ENCODE measurements at regions of chr14 and their contacts with region 1.

Region 1: DNA sequence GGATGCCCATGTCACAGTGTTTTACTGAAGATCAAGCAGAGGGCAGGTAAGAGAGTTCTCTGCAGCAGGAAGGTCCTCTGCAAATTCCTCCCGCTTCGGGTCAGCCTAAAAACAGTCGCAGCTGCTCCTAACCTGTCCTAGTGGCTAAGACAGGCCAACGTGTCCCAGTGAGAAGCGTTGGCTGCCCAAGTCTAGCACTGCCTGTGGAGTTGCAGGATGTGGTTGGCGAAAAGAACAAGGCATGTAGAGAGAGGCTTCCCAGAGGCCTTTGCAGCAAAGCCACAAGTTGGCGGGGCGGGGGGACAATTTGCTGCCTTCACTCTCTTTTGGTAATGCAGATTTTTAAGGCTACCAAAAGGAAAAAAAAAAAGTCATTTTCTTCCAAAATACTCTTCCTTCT is 340.1 kb downstream of the BCL11B start:
- DNase-seq: peak; percentile 56 to 93 (median 79)
- ATAC-seq: peak; percentile 95
- H3K4me3 ChIP-seq: peak overlapping the region; percentile 36
- H3K4me3 Mint-ChIP-seq: peak overlapping the region; percentile 67
- H3K27ac ChIP-seq: peak overlapping the region; percentile 50 to 52
- H3K27ac Mint-ChIP-seq: peak overlapping the region; percentile 87
- H3K4me1 ChIP-seq: peaks cover 80% of the 10 kb centered on the region
- H3K4me1 Mint-ChIP-seq: peaks cover 98% of the 10 kb centered on the region
- H3K27me3 ChIP-seq: no peaks in the 10 kb centered on the region
- H3K27me3 Mint-ChIP-seq: no peaks in the 10 kb centered on the region
- CTCF ChIP-seq: no peak

Region 2: GRCh38 chr14:98154254-98154653 is 777.7 kb before region 1 on chr14:
- CTCF ChIA-PET with region 1: no interaction called
- POLR2A ChIA-PET with region 1: no interaction called
- intact Hi-C with region 1: loop called in 1 of 2 experiments (anchors 10 kb)
- DNase-seq: no peak
- ATAC-seq: no peak
- H3K4me3 ChIP-seq: no peak overlapping the region
- H3K4me3 Mint-ChIP-seq: no peak overlapping the region
- H3K27ac ChIP-seq: no peak overlapping the region
- H3K27ac Mint-ChIP-seq: peak overlapping the region; percentile 28
- H3K4me1 ChIP-seq: peaks cover 8% of the 10 kb centered on the region
- H3K4me1 Mint-ChIP-seq: peaks cover 78% of the 10 kb centered on the region
- H3K27me3 ChIP-seq: no peaks in the 10 kb centered on the region
- H3K27me3 Mint-ChIP-seq: no peaks in the 10 kb centered on the region
- CTCF ChIP-seq: no peak

Region 3: DNA sequence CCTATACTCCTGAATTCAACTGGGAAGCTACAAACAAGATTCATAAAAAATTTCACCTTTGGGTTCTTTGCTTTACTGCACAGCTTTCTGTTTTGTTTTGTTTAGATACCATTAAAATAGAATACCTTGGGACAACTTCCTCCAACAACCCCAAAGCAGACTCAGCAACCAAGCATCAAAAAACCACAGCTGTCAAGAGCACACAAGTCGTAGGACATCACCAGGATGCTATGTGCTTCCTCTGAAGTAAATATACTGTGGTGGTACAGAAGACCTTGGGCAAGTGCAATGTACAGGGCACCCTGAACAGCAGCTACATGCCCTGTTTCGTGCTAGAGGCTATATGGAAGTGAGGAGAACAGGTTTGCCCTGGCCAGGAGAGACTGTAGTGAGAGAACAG is 19.3 kb before region 1 on chr14:
- CTCF ChIA-PET with region 1: no interaction called
- POLR2A ChIA-PET with region 1: interaction called, 17 read pairs
- intact Hi-C with region 1: no loop called
- DNase-seq: peak in 5 of 14 experiments; percentile 9 to 79 (median 39)
- ATAC-seq: peak; percentile 84
- H3K4me3 ChIP-seq: no peak overlapping the region
- H3K4me3 Mint-ChIP-seq: peak overlapping the region; percentile 21
- H3K27ac ChIP-seq: no peak overlapping the region
- H3K27ac Mint-ChIP-seq: peak overlapping the region; percentile 60
- H3K4me1 ChIP-seq: peaks cover 22% of the 10 kb centered on the region
- H3K4me1 Mint-ChIP-seq: peaks cover 47% of the 10 kb centered on the region
- H3K27me3 ChIP-seq: no peaks in the 10 kb centered on the region
- H3K27me3 Mint-ChIP-seq: no peaks in the 10 kb centered on the region
- CTCF ChIP-seq: no peak

Region 4: DNA sequence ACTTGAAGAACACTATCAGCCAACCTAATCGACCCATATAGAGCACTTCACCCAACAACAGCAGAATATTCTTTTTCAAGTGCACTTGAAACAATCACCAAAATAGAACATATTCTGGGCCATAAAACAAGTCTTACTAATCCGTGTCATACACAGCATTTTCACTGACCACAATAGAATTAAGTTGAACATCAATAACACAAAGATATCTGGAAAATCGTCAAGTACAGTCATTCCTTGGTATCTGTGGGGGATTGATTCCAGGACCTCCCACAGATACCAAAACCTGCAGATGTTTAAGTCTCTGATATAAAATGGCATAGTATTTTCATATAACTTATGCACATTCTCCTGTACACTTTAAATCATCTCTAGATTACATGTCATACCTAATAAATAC is 44.4 kb after region 1 on chr14:
- CTCF ChIA-PET with region 1: no interaction called
- POLR2A ChIA-PET with region 1: no interaction called
- intact Hi-C with region 1: loop called (anchors 5 kb)
- DNase-seq: no peak
- ATAC-seq: no peak
- H3K4me3 ChIP-seq: no peak overlapping the region
- H3K4me3 Mint-ChIP-seq: no peak overlapping the region
- H3K27ac ChIP-seq: no peak overlapping the region
- H3K27ac Mint-ChIP-seq: no peak overlapping the region
- H3K4me1 ChIP-seq: no peaks in the 10 kb centered on the region
- H3K4me1 Mint-ChIP-seq: peaks cover 8% of the 10 kb centered on the region
- H3K27me3 ChIP-seq: no peaks in the 10 kb centered on the region
- H3K27me3 Mint-ChIP-seq: no peaks in the 10 kb centered on the region
- CTCF ChIP-seq: no peak

Region 5: DNA sequence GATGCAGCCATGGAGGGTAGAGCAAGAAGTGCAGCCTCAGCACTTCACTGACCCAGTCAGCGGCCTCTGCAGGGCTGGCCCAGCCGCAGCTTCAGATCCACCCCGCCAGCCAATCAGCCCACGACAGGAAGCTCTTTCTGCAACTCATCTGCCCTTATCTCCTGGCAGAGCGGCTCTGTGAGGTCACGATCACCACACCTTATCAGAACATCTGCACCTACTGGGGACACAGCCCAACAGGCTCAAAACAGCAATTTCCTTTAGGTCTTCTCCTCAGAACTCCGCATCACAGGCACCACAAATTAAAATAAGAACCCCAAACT is 52.8 kb after region 1 on chr14:
- CTCF ChIA-PET with region 1: no interaction called
- POLR2A ChIA-PET with region 1: interaction called, 29 read pairs
- intact Hi-C with region 1: loop called (anchors 5 kb)
- DNase-seq: peak; percentile 49 to 92 (median 66)
- ATAC-seq: peak; percentile 86
- H3K4me3 ChIP-seq: peak overlapping the region; percentile 28
- H3K4me3 Mint-ChIP-seq: peak overlapping the region; percentile 81
- H3K27ac ChIP-seq: peak overlapping the region; percentile 31 to 77
- H3K27ac Mint-ChIP-seq: peak overlapping the region; percentile 89
- H3K4me1 ChIP-seq: peaks cover 32% of the 10 kb centered on the region
- H3K4me1 Mint-ChIP-seq: peaks cover 54% of the 10 kb centered on the region
- H3K27me3 ChIP-seq: no peaks in the 10 kb centered on the region
- H3K27me3 Mint-ChIP-seq: no peaks in the 10 kb centered on the region
- CTCF ChIP-seq: no peak

Region 6: DNA sequence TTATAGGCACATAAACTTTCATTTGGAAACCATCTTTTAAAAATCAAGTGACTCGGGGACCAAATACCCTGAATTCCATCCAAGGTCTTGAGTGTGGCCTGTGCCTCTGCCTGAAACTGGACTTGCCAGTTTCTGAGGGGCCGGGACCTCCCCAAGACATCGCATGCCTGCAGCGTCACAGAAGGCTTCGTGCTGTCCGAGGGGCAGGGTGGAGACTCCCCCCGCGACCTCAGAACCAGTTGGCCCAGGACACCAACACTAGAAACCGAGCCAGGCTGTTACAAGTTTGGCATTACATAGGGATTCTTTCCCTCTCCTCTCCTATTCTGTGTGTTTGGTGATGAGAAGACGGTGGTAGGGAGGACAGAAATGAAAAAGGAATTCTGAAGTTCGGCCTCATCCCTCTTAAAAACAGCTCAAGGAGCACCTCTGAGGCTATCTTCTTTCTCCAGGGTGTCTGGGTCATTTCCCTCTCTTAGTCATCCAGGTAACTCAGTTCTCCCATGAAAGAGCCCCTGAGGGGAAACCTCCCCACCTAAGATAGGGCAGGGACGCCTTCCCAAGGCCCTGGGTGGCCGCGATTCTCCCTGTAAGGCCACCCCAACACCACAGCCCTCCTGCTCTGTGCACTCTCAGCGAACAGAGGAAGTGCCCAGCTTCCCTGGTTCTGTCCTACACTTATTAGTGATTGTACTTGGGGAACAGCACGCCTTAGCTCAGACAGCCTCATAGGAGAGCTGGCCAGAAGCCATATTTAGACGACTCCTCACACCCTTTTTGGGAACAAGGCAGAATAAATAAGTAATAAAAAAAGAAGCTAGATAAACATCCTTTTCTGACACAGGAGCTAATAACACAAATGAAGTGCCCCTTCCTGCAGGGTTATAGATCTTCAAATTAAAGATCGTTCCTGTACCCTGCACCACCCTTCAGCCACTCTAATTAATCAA is 246.2 kb after region 1 on chr14:
- CTCF ChIA-PET with region 1: no interaction called
- POLR2A ChIA-PET with region 1: no interaction called
- intact Hi-C with region 1: loop called in 1 of 2 experiments (anchors 5 kb)
- DNase-seq: peak in 2 of 14 experiments; percentile 0 to 9
- ATAC-seq: no peak
- H3K4me3 ChIP-seq: no peak overlapping the region
- H3K4me3 Mint-ChIP-seq: peak overlapping the region; percentile 39
- H3K27ac ChIP-seq: peak overlapping the region; percentile 37 to 80
- H3K27ac Mint-ChIP-seq: peak overlapping the region; percentile 95
- H3K4me1 ChIP-seq: peaks cover 56% of the 10 kb centered on the region
- H3K4me1 Mint-ChIP-seq: peaks cover 75% of the 10 kb centered on the region
- H3K27me3 ChIP-seq: no peaks in the 10 kb centered on the region
- H3K27me3 Mint-ChIP-seq: no peaks in the 10 kb centered on the region
- CTCF ChIP-seq: no peak

Measured in CD4-positive, alpha-beta T cell (primary cell).